Mammary epithelial cell (primary cell): ENCODE measurements at regions of chr6 and their contacts with region 1.

Region 1: GRCh38 chr6:37077905-37078296 is 72.4 kb downstream of the FGD2 start:
- DNase-seq: peak; percentile 54
- H3K4me3 ChIP-seq: no peak overlapping the region
- H3K27ac ChIP-seq: no peak overlapping the region
- H3K4me1 ChIP-seq: peaks cover 12% of the 10 kb centered on the region
- H3K27me3 ChIP-seq: no peaks in the 10 kb centered on the region
- CTCF ChIP-seq: no peak

Region 2: DNA sequence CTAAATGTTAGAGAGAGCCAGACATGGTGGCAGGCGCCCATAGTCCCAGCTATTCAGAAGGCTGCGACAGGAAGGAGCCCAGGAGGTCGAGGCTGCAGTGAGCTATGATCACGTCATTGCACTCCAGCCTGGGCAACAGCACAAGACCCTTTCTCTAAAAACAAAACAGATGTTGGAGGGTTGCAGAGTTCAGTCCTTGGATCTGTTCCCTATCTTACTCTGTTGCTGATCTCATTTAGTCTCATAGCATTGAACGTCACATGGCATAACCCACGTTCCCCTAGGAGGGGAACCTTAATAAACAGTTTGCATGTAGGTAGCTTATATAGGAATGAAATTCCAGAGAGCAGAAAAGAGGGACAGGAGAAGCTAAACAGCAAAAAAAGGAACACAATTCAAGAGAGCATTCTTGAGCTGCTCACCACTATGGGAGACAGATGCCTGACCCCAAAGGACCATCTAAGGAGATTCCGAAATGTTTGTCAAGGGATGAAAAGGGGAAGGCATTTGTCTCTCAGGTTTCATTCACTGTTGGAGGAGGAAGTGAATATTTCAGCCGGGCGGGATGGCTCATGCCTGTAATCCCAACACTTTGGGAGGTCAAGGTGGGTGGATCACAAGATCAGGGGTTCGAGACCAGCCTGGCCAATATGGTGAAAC is 37.5 kb after region 1 on chr6:
- CTCF ChIA-PET with region 1: no interaction called
- dilution Hi-C with region 1: no loop called
- in situ Hi-C with region 1: no loop called
- intact Hi-C with region 1: no loop called
- DNase-seq: no peak
- H3K4me3 ChIP-seq: no peak overlapping the region
- H3K27ac ChIP-seq: no peak overlapping the region
- H3K4me1 ChIP-seq: no peaks in the 10 kb centered on the region
- H3K27me3 ChIP-seq: no peaks in the 10 kb centered on the region
- CTCF ChIP-seq: no peak

Region 3: GRCh38 chr6:37127961-37128862 is 50.3 kb after region 1 on chr6:
- CTCF ChIA-PET with region 1: interaction called, 4 read pairs
- dilution Hi-C with region 1: no loop called
- in situ Hi-C with region 1: no loop called
- intact Hi-C with region 1: loop called (anchors 5 kb)
- DNase-seq: peak; percentile 18
- H3K4me3 ChIP-seq: no peak overlapping the region
- H3K27ac ChIP-seq: no peak overlapping the region
- H3K4me1 ChIP-seq: peaks cover 42% of the 10 kb centered on the region
- H3K27me3 ChIP-seq: no peaks in the 10 kb centered on the region
- CTCF ChIP-seq: no peak

Region 4: GRCh38 chr6:37137201-37138090 is 59.5 kb after region 1 on chr6:
- CTCF ChIA-PET with region 1: no interaction called
- dilution Hi-C with region 1: loop called (anchors 5 kb)
- in situ Hi-C with region 1: no loop called
- intact Hi-C with region 1: no loop called
- DNase-seq: peak; percentile 96
- H3K4me3 ChIP-seq: no peak overlapping the region
- H3K27ac ChIP-seq: peak overlapping the region; percentile 86
- H3K4me1 ChIP-seq: peaks cover 44% of the 10 kb centered on the region
- H3K27me3 ChIP-seq: no peaks in the 10 kb centered on the region
- CTCF ChIP-seq: no peak

Region 5: DNA sequence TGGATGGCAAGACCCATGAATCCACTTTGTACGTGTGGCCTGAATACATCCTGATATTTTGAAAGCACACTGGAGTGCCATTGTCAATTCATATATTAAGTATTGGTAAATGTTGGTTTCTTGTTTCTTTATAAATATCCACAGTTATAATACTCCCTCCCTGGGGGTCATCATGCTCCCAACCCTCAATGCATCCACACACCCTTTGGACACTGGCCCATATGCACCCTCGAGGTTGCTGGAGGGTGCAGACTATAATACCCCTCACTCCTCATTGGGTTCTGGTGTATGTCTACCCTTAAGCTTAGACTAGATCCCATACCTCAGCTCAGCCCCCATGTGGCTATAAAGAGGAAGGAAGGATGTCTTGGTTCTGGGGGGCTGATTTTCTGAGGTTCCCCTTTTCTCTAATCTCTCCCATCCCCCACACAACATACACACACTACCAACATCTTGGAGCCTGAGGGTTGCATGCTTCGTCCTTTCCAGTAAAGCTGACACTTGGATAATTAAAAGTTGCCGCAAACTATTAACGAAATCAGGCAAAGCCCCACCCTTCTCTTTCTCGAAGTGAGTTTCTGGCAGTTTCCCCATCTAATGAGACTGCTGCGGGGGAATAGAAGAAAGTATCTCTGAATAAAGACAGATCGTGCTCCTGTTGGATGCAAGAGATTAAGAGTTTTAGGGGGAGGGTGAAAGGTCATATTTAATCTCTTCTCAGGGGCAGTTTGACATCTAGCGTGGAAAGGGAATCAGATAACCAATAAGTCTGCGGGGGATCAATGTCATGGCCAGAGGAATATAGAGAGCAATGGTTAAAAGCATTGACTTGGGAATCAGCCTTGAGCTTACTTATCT is 99.4 kb after region 1 on chr6:
- CTCF ChIA-PET with region 1: no interaction called
- dilution Hi-C with region 1: loop called (anchors 5 kb)
- in situ Hi-C with region 1: no loop called
- intact Hi-C with region 1: no loop called
- DNase-seq: no peak
- H3K4me3 ChIP-seq: no peak overlapping the region
- H3K27ac ChIP-seq: no peak overlapping the region
- H3K4me1 ChIP-seq: peaks cover 4% of the 10 kb centered on the region
- H3K27me3 ChIP-seq: no peaks in the 10 kb centered on the region
- CTCF ChIP-seq: no peak